Activated CD4-positive, alpha-beta T cell treated with anti-CD3 and anti-CD28 coated beads for 36 hours (primary cell): ENCODE measurements at regions of chr6 and their contacts with region 1.

Region 1: GRCh38 chr6:115901896-115902295 is 158.8 kb downstream of the FRK start:
- DNase-seq: no peak
- ATAC-seq: no peak
- H3K4me3 Mint-ChIP-seq: no peak overlapping the region
- H3K27ac Mint-ChIP-seq: no peak overlapping the region
- H3K4me1 Mint-ChIP-seq: no peaks in the 10 kb centered on the region
- H3K27me3 Mint-ChIP-seq: peaks cover under 1% of the 10 kb centered on the region

Region 2: GRCh38 chr6:115882174-115882573 is 19.7 kb before region 1 on chr6:
- CTCF ChIA-PET with region 1: no interaction called
- POLR2A ChIA-PET with region 1: no interaction called
- intact Hi-C with region 1: loop called in 1 of 2 experiments (anchors 1 kb)
- DNase-seq: no peak
- ATAC-seq: no peak
- H3K4me3 Mint-ChIP-seq: no peak overlapping the region
- H3K27ac Mint-ChIP-seq: no peak overlapping the region
- H3K4me1 Mint-ChIP-seq: no peaks in the 10 kb centered on the region
- H3K27me3 Mint-ChIP-seq: peaks cover 3% of the 10 kb centered on the region

Region 3: GRCh38 chr6:115914098-115914497 is 12.2 kb after region 1 on chr6:
- CTCF ChIA-PET with region 1: no interaction called
- POLR2A ChIA-PET with region 1: no interaction called
- intact Hi-C with region 1: no loop called
- DNase-seq: no peak
- ATAC-seq: no peak
- H3K4me3 Mint-ChIP-seq: no peak overlapping the region
- H3K27ac Mint-ChIP-seq: no peak overlapping the region
- H3K4me1 Mint-ChIP-seq: no peaks in the 10 kb centered on the region
- H3K27me3 Mint-ChIP-seq: peaks cover 9% of the 10 kb centered on the region